ENCODE measurements at regions of chr4 and their contacts with region 1.

Region 1: GRCh38 chr4:129515356-129515755 is 419.4 kb downstream of the C4orf33 start:
- DNase-seq: no peak
- ATAC-seq: no peak
- H3K4me3 ChIP-seq: no peak overlapping the region
- H3K4me3 Mint-ChIP-seq: no peak overlapping the region
- H3K27ac ChIP-seq: no peak overlapping the region
- H3K27ac Mint-ChIP-seq: no peak overlapping the region
- H3K4me1 ChIP-seq: no peaks in the 10 kb centered on the region
- H3K4me1 Mint-ChIP-seq: no peaks in the 10 kb centered on the region
- H3K27me3 ChIP-seq: no peaks in the 10 kb centered on the region
- H3K27me3 Mint-ChIP-seq: no peaks in the 10 kb centered on the region

Region 2: DNA sequence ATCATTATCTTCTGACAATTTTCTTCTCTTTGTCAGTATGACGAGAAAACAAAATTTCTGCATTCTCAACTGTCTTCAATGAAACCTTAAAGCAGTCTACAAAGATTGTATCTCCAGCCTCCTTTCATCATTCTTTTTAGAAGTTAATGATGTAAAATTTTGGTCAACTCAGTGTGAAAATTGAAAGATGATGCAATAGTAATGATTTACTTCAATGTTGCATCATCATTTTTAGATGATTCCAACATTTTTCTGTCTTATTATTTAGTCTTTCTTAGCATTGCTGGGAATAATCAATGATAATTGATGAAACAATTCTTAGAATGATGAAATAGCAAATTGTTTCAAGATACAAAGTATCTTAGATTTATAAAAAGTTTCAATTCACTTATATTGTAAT is 46.7 kb before region 1 on chr4:
- CTCF ChIA-PET with region 1: no interaction called
- POLR2A ChIA-PET with region 1: no interaction called
- intact Hi-C with region 1: loop called in 1 of 2 experiments (anchors 2 kb)
- DNase-seq: no peak
- ATAC-seq: no peak
- H3K4me3 ChIP-seq: no peak overlapping the region
- H3K4me3 Mint-ChIP-seq: no peak overlapping the region
- H3K27ac ChIP-seq: no peak overlapping the region
- H3K27ac Mint-ChIP-seq: no peak overlapping the region
- H3K4me1 ChIP-seq: no peaks in the 10 kb centered on the region
- H3K4me1 Mint-ChIP-seq: no peaks in the 10 kb centered on the region
- H3K27me3 ChIP-seq: no peaks in the 10 kb centered on the region
- H3K27me3 Mint-ChIP-seq: no peaks in the 10 kb centered on the region